B cell (primary cell): ENCODE measurements at regions of chr17 and their contacts with region 1.

Region 1: GRCh38 chr17:45161019-45161825 is 453 bp upstream of the HEXIM2 start:
- DNase-seq: peak; percentile 100
- ATAC-seq: peak; percentile 93
- H3K4me3 ChIP-seq: peak overlapping the region; percentile 64 to 98 (median 92)
- H3K4me3 Mint-ChIP-seq: peak overlapping the region; percentile 95
- H3K27ac ChIP-seq: peak overlapping the region; percentile 98
- H3K27ac Mint-ChIP-seq: peak overlapping the region; percentile 97
- H3K4me1 ChIP-seq: peaks cover 19 to 28% of the 10 kb centered on the region in 2 donors
- H3K4me1 Mint-ChIP-seq: peaks cover 37% of the 10 kb centered on the region
- H3K27me3 ChIP-seq: no peaks in the 10 kb centered on the region
- H3K27me3 Mint-ChIP-seq: no peaks in the 10 kb centered on the region
- CTCF ChIP-seq: no peak

Region 2: DNA sequence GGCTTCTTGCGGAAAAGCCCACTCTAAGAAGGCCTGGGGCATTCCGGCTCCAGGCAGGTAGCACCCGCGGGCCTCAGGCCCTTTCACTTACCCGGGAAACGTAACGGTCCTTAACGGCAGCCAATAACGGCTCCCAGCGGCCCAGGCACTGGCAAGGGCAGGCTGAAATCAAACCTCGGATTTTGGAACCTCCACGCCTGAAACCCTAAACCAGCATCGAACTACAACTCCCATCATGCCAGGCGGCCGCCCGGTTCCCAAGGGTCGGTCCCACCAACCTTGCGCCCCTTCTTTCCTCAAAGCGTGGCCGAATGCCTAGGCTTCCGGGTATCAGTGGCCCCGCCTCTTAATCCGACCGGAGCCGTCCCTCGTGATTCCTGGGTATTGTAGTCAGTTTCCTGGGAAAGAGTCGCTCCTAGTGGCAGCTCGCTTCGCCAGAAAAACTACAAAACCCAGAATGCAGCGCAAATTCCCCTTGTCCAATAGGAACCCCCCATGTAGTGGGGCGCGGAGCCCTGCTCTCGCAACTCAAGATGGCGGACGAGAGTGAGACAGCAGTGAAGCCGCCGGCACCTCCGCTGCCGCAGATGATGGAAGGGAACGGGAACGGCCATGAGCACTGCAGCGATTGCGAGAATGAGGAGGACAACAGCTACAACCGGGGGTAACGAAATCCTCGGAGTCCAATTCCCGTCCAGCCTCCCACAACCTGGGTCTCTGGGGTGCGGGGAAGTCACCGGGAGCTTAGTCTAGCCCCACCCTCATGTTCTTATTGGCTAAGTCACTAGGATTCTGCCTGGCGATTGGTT is 100.2 kb before region 1 on chr17 and contains the start of gene NMT1:
- CTCF ChIA-PET with region 1: no interaction called
- POLR2A ChIA-PET with region 1: interaction called, 6 read pairs
- intact Hi-C with region 1: loop called (anchors 1 kb)
- DNase-seq: peak; percentile 100
- ATAC-seq: peak; percentile 87
- H3K4me3 ChIP-seq: peak within 1 kb of the TSS; percentile 62 to 98 (median 96)
- H3K4me3 Mint-ChIP-seq: peak within 1 kb of the TSS; percentile 99
- H3K27ac ChIP-seq: peak within 1 kb of the TSS; percentile 75 to 89
- H3K27ac Mint-ChIP-seq: peak within 1 kb of the TSS; percentile 100
- H3K4me1 ChIP-seq: peaks cover 29 to 42% of the 10 kb centered on the region in 2 donors
- H3K4me1 Mint-ChIP-seq: peaks cover 40% of the 10 kb centered on the region
- H3K27me3 ChIP-seq: no peaks in the 10 kb centered on the region
- H3K27me3 Mint-ChIP-seq: no peaks in the 10 kb centered on the region
- CTCF ChIP-seq: no peak
- total RNA-seq, gene NMT1: 123 and 134 TPM in 2 replicates

Region 3: GRCh38 chr17:45123930-45124796 is 37.1 kb before region 1 on chr17:
- CTCF ChIA-PET with region 1: no interaction called
- POLR2A ChIA-PET with region 1: no interaction called
- intact Hi-C with region 1: no loop called
- DNase-seq: no peak
- ATAC-seq: peak; percentile 73
- H3K4me3 ChIP-seq: no peak overlapping the region
- H3K4me3 Mint-ChIP-seq: no peak overlapping the region
- H3K27ac ChIP-seq: no peak overlapping the region
- H3K27ac Mint-ChIP-seq: no peak overlapping the region
- H3K4me1 ChIP-seq: no peaks in the 10 kb centered on the region
- H3K4me1 Mint-ChIP-seq: no peaks in the 10 kb centered on the region
- H3K27me3 ChIP-seq: peaks cover 0 to 7% (median 0%) of the 10 kb centered on the region in 4 experiments
- H3K27me3 Mint-ChIP-seq: peaks cover 5% of the 10 kb centered on the region
- CTCF ChIP-seq: no peak

Region 4: DNA sequence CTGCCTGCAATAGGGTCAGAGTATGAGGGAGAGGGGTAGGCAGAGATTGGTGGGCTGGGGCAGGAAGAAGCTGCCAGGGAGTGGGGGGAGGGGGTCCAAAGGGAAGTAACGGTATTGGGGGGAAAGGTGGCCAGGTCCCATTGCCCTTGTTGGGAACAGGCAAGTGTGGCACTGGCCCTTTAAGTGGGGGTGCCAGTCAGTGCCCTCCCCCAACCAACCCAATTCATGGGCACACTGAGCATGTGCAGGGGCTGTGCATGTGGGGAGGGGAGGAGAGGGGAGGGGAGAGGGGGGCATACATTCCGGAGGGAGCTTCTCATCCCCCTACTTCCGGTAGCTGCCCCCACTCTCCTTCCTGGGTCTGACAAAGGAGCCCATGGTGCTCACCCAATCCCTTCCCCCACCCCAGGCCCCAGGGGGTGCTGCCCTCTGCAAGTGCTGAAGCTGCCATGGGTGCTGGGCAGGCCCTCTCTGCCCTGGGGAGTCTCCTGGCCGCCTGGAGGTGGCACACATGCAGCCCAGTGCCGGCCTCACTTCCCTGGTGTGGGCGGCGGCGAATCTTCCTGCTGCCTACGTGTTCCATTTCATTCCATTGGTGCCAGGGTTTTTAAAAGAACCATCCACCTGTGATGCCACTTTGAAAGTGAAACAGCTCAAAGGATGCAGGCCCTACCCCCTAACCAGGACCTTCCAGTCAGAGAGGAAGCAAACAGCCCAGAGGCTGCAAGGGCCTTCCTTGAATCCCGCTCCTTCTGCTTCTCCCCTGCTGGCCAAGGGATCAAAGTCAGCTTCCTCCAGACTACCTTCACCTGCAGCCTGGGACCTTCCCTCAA is 11.4 kb after region 1 on chr17:
- CTCF ChIA-PET with region 1: interaction called, 5 read pairs
- POLR2A ChIA-PET with region 1: interaction called, 23 read pairs
- intact Hi-C with region 1: loop called (anchors 1 kb)
- DNase-seq: peak; percentile 59
- ATAC-seq: peak; percentile 85
- H3K4me3 ChIP-seq: peak overlapping the region in 4 of 5 experiments; percentile 31 to 51 (median 49)
- H3K4me3 Mint-ChIP-seq: peak overlapping the region; percentile 86
- H3K27ac ChIP-seq: peak overlapping the region; percentile 40 to 63
- H3K27ac Mint-ChIP-seq: peak overlapping the region; percentile 97
- H3K4me1 ChIP-seq: peaks cover 11 to 16% of the 10 kb centered on the region in 2 donors
- H3K4me1 Mint-ChIP-seq: peaks cover 12% of the 10 kb centered on the region
- H3K27me3 ChIP-seq: no peaks in the 10 kb centered on the region
- H3K27me3 Mint-ChIP-seq: no peaks in the 10 kb centered on the region
- CTCF ChIP-seq: no peak

Region 5: DNA sequence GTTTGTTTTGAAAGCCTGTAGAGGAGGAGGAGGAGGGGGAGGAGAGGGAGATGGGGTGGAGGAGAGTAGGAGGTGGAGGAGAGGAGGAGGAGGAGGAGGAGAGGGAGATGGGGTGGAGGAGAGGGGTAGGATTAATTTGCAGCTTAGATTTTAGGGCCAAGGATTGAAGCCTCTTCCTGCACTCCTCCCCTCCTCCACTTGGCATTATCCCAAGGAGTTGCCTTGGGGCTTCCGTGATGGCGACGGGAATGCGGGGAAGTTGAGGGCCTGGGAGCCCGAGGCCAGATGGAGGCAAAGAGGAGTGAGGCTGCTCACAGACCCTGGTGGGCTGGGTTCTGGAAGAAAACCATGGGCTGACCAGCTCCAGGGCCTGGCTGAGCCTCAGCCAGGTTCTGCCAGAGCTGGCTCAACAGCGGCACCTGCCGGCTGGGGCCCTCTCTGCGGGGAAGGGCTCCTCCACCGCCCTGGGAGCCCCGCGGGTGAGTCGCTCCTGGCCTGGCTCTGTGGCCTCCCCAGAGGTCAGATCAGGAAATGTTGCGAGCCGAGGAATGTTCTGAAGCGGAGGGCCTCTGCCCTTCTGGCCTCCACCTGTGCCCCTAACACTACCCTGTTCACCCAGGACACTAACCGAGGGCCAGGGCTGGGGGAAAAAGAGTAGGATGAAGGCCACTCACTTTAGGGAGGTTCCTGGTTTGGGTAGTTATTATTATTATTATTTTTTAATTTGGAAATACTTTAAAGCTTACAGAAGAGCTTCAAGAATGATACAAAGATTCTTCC is 36.5 kb after region 1 on chr17:
- CTCF ChIA-PET with region 1: interaction called, 21 read pairs
- POLR2A ChIA-PET with region 1: interaction called, 9 read pairs
- intact Hi-C with region 1: no loop called
- DNase-seq: peak; percentile 87
- ATAC-seq: peak; percentile 100
- H3K4me3 ChIP-seq: no peak overlapping the region
- H3K4me3 Mint-ChIP-seq: no peak overlapping the region
- H3K27ac ChIP-seq: no peak overlapping the region
- H3K27ac Mint-ChIP-seq: peak overlapping the region; percentile 15
- H3K4me1 ChIP-seq: peaks cover 0 to 6% of the 10 kb centered on the region in 2 donors
- H3K4me1 Mint-ChIP-seq: peaks cover 9% of the 10 kb centered on the region
- H3K27me3 ChIP-seq: no peaks in the 10 kb centered on the region
- H3K27me3 Mint-ChIP-seq: no peaks in the 10 kb centered on the region
- CTCF ChIP-seq: peak; percentile 97

Region 6: GRCh38 chr17:45228763-45229539 is 67.7 kb after region 1 on chr17:
- CTCF ChIA-PET with region 1: interaction called, 3 read pairs
- POLR2A ChIA-PET with region 1: interaction called, 6 read pairs
- intact Hi-C with region 1: loop called (anchors 1 kb)
- DNase-seq: peak; percentile 94
- ATAC-seq: peak; percentile 52
- H3K4me3 ChIP-seq: peak overlapping the region; percentile 8 to 96 (median 90)
- H3K4me3 Mint-ChIP-seq: peak overlapping the region; percentile 100
- H3K27ac ChIP-seq: peak overlapping the region; percentile 99 to 100
- H3K27ac Mint-ChIP-seq: peak overlapping the region; percentile 99
- H3K4me1 ChIP-seq: peaks cover 70 to 90% of the 10 kb centered on the region in 2 donors
- H3K4me1 Mint-ChIP-seq: peaks cover 95% of the 10 kb centered on the region
- H3K27me3 ChIP-seq: no peaks in the 10 kb centered on the region
- H3K27me3 Mint-ChIP-seq: no peaks in the 10 kb centered on the region
- CTCF ChIP-seq: no peak